ENCODE measurements at regions of chr17 and their contacts with region 1.

Region 1: GRCh38 chr17:61389670-61390478 is 9.8 kb upstream of the TBX2 start:
- DNase-seq: peak; percentile 40
- H3K4me3 ChIP-seq: no peak overlapping the region
- H3K27ac ChIP-seq: no peak overlapping the region
- H3K4me1 ChIP-seq: peaks cover 0 to 7% (median 2%) of the 10 kb centered on the region in 4 donors
- H3K27me3 ChIP-seq: peaks cover 8% of the 10 kb centered on the region
- CTCF ChIP-seq: peak; percentile 75 to 87 (median 82)
- EP300 ChIP-seq: no peak
- POLR2A ChIP-seq: no peak

Region 2: GRCh38 chr17:60720763-60721531 is 668.9 kb before region 1 on chr17:
- in situ Hi-C with region 1: loop called (anchors 25 kb)
- intact Hi-C with region 1: no loop called
- DNase-seq: peak; percentile 10
- H3K4me3 ChIP-seq: no peak overlapping the region
- H3K27ac ChIP-seq: no peak overlapping the region
- H3K4me1 ChIP-seq: peaks cover 0 to 4% (median 0%) of the 10 kb centered on the region in 4 donors
- H3K27me3 ChIP-seq: no peaks in the 10 kb centered on the region
- CTCF ChIP-seq: peak; percentile 70 to 93 (median 89)
- EP300 ChIP-seq: no peak
- POLR2A ChIP-seq: no peak

Region 3: DNA sequence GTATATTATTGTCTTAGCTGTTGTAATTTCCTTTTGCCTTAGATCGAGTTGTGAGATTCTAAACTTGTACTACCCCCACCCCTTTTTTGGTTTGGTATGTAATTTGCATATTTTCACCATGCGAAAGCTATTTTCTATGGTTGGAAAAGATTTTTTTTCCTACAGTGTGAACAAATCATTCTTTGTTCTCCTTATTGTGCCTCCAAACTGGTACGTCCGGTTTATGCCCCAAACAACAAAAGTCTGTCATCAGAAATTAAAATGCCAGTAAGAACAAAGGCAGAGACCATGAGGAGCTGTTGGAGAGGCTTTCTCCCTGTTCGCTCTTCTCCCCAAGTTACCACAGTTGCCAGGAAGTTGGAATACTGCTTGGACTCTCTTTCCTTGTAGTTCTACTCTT is 646.1 kb before region 1 on chr17:
- in situ Hi-C with region 1: loop called in 2 of 4 experiments (anchors 25 kb)
- intact Hi-C with region 1: no loop called
- DNase-seq: no peak
- H3K4me3 ChIP-seq: no peak overlapping the region
- H3K27ac ChIP-seq: peak overlapping the region; percentile 10 to 40 (median 18)
- H3K4me1 ChIP-seq: peaks cover 0 to 19% (median 3%) of the 10 kb centered on the region in 4 donors
- H3K27me3 ChIP-seq: no peaks in the 10 kb centered on the region
- CTCF ChIP-seq: no peak
- EP300 ChIP-seq: no peak
- POLR2A ChIP-seq: no peak

Region 4: GRCh38 chr17:60989379-60989778 is 400.5 kb before region 1 on chr17:
- in situ Hi-C with region 1: loop called in 2 of 4 experiments (anchors 10 to 25 kb)
- intact Hi-C with region 1: no loop called
- DNase-seq: no peak
- H3K4me3 ChIP-seq: no peak overlapping the region
- H3K27ac ChIP-seq: no peak overlapping the region
- H3K4me1 ChIP-seq: no peaks in the 10 kb centered on the region
- H3K27me3 ChIP-seq: no peaks in the 10 kb centered on the region
- CTCF ChIP-seq: no peak
- EP300 ChIP-seq: no peak
- POLR2A ChIP-seq: no peak

Region 5: GRCh38 chr17:61002316-61002736 is 387.5 kb before region 1 on chr17:
- in situ Hi-C with region 1: loop called (anchors 5 to 25 kb)
- intact Hi-C with region 1: no loop called
- DNase-seq: no peak
- H3K4me3 ChIP-seq: no peak overlapping the region
- H3K27ac ChIP-seq: no peak overlapping the region
- H3K4me1 ChIP-seq: no peaks in the 10 kb centered on the region
- H3K27me3 ChIP-seq: no peaks in the 10 kb centered on the region
- CTCF ChIP-seq: peak; percentile 37 to 46 (median 43)
- EP300 ChIP-seq: no peak
- POLR2A ChIP-seq: no peak

Region 6: GRCh38 chr17:61188081-61188480 is 201.8 kb before region 1 on chr17:
- in situ Hi-C with region 1: no loop called
- intact Hi-C with region 1: no loop called
- DNase-seq: no peak
- H3K4me3 ChIP-seq: no peak overlapping the region
- H3K27ac ChIP-seq: no peak overlapping the region
- H3K4me1 ChIP-seq: no peaks in the 10 kb centered on the region
- H3K27me3 ChIP-seq: no peaks in the 10 kb centered on the region
- CTCF ChIP-seq: no peak
- EP300 ChIP-seq: no peak
- POLR2A ChIP-seq: no peak

Region 7: DNA sequence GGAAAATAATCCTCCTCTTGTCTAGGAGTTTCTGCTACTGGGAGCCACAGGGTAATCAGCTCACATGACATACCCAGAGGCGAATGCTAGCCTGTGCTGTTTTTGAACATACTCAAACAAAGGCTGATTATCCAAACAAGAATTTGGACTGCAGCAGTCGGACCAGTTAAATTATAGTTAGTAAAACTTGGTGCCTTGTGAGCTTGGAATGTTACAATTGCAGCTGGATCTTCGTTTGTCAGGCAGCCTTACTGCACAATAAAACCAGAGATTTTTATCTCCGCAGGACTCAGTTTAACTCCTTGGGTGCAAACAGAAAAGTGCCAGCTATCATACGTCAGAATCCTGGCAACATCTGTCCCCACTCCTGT is 154.1 kb before region 1 on chr17:
- in situ Hi-C with region 1: loop called in 1 of 4 experiments (anchors 25 kb)
- intact Hi-C with region 1: no loop called
- DNase-seq: no peak
- H3K4me3 ChIP-seq: no peak overlapping the region
- H3K27ac ChIP-seq: peak overlapping the region in 1 of 4 donors; percentile 47
- H3K4me1 ChIP-seq: peaks cover 0 to 26% (median 1%) of the 10 kb centered on the region in 4 donors
- H3K27me3 ChIP-seq: no peaks in the 10 kb centered on the region
- CTCF ChIP-seq: no peak
- EP300 ChIP-seq: no peak
- POLR2A ChIP-seq: no peak